CD8-positive, alpha-beta memory T cell (primary cell): ENCODE measurements at regions of chr1 and their contacts with region 1.

Region 1: DNA sequence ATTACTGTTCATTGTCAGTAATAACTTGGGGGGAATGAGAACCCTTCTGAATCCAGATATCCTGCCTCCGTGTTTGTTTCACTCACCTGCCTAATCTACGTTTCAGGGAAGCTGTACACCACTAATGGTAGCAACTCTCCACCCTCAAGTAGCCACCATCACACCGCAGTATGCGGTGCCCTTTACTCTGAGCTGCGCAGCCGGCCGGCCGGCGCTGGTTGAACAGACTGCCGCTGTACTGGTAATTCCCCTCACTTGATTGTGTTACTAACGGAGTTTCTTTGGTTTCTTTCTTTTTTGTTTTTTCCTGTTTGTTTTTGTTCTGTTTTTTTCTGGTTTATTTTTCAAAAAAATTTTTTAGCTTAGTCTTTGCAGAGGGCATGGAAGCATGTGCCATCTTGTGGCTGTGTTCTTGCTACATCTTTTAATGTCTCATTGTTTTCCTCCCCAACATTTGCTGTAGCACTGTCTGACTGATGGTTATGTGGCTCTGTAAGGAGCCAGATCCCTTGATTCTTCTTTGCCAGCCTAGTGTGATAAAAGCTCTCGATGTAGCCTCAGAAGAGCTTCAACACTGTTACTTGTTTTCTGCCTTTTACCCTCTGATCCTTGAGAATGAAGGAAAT is 15.9 kb upstream of the OLFML3 start:
- DNase-seq: peak in 1 of 5 donors; percentile 31
- H3K4me3 ChIP-seq: no peak overlapping the region
- H3K4me3 Mint-ChIP-seq: no peak overlapping the region
- H3K27ac ChIP-seq: no peak overlapping the region
- H3K27ac Mint-ChIP-seq: peak overlapping the region in 5 of 8 donors; percentile 0 to 83 (median 36)
- H3K4me1 ChIP-seq: no peaks in the 10 kb centered on the region
- H3K4me1 Mint-ChIP-seq: peaks cover 16 to 31% (median 27%) of the 10 kb centered on the region in 3 donors
- H3K27me3 ChIP-seq: no peaks in the 10 kb centered on the region
- H3K27me3 Mint-ChIP-seq: no peaks in the 10 kb centered on the region

Region 2: DNA sequence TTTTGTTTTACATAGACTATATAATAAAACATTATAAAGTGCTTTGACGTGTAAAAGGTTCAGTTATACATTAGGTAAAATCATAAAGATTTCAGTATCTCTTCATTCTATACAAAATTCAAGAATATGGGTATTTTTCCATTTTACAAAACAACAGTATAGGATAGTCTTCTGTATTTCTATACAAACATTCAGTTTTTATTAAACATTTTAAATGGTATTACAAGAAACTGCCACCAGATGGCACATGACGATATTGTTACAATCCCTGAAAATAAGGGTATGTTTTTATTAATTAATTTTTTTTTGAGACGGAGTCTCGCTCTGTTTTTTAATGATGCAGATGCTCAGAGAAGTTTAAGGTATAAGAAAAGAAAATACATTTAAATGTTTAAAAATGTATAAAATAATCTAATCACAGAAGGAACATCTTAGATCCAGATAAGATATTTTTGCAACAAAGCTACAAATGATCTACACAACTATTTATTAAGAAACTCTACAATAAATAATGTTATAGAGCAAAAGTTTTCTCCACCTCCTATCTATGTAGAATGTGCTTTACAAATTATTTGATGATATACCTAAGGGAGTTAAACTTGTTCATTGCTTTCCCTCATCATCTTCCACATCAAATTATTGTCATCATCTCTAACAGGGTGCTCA is 127.6 kb before region 1 on chr1:
- CTCF ChIA-PET with region 1: interaction called, 11 read pairs
- POLR2A ChIA-PET with region 1: no interaction called
- DNase-seq: peak in 3 of 5 donors; percentile 3 to 59 (median 47)
- H3K4me3 ChIP-seq: no peak overlapping the region
- H3K4me3 Mint-ChIP-seq: no peak overlapping the region
- H3K27ac ChIP-seq: no peak overlapping the region
- H3K27ac Mint-ChIP-seq: peak overlapping the region in 6 of 8 donors; percentile 6 to 71 (median 54)
- H3K4me1 ChIP-seq: no peaks in the 10 kb centered on the region
- H3K4me1 Mint-ChIP-seq: peaks cover 9 to 14% (median 10%) of the 10 kb centered on the region in 3 donors
- H3K27me3 ChIP-seq: no peaks in the 10 kb centered on the region
- H3K27me3 Mint-ChIP-seq: no peaks in the 10 kb centered on the region